ENCODE measurements at regions of chr13 and their contacts with region 1.

Region 1: GRCh38 chr13:108155185-108156106 is 59.9 kb downstream of the LIG4 start:
- DNase-seq: peak; percentile 33
- H3K4me3 ChIP-seq: no peak overlapping the region
- CTCF ChIP-seq: peak; percentile 84

Region 2: GRCh38 chr13:107373551-107373950 is 781.9 kb before region 1 on chr13:
- in situ Hi-C with region 1: loop called (anchors 10 kb)
- DNase-seq: peak; percentile 80
- H3K4me3 ChIP-seq: no peak overlapping the region
- CTCF ChIP-seq: peak; percentile 76

Measured in astrocyte of the cerebellum (primary cell).